ENCODE measurements at regions of chr3 and their contacts with region 1.

Region 1: DNA sequence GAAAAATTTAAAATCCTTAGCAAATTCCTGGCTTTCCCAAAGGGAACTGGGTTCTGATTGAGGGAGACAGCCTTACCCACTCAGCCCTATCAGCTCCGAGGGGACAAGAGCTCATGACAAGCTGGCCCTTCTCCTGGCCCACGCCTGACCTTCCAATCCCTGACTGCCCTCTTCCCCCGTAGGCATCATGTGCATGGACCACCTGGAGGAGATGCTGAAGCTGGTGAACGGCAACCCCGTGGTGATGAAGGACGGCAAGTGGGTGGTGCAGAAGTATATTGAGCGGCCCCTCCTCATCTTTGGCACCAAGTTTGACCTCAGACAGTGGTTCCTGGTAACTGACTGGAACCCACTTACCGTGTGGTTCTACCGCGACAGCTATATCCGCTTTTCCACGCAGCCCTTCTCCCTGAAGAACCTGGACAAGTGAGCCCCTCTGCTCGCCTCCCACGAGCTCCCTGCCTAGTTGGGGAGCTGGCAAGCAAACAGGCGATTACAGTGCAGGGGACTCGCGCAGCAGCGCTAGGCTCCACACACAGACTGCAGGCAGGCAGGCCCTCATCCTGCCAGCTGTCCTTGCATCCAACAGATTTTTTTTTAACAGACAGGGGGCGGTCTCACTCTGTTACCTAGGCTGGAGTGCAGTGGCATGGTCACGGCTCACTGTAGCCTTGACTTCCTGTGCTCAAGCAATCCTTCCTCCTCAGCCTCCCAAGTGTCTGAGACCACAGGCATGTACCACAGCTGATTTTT is 16.8 kb downstream of the RPUSD3 start:
- DNase-seq: no peak
- H3K4me3 ChIP-seq: no peak overlapping the region
- H3K27ac ChIP-seq: no peak overlapping the region
- H3K27me3 ChIP-seq: no peaks in the 10 kb centered on the region
- CTCF ChIP-seq: peak; percentile 28; the same call in 1 of the 2 replicates

Region 2: DNA sequence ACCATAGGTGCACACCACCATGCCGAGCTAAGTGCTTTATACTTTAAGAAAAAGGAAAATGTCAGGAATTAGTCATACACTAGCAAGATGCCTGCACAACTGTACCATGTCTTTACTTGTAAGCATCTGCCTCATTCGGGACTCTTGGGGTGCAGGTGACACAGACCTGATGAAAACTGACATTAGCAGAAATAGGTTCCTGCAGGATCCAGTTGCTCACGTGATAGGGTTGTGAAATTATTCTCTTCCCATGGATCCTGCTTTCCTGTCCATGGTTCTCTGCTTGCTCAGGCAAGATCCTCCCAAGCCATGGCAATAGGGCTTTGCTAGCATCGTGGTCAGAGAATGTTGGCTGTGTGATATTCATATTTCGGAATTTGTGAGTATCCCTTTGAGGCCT is 263.1 kb before region 1 on chr3:
- CTCF ChIA-PET with region 1: no interaction called
- POLR2A ChIA-PET with region 1: no interaction called
- DNase-seq: no peak
- H3K4me3 ChIP-seq: no peak overlapping the region
- H3K27ac ChIP-seq: no peak overlapping the region
- H3K27me3 ChIP-seq: no peaks in the 10 kb centered on the region
- CTCF ChIP-seq: no peak

Region 3: DNA sequence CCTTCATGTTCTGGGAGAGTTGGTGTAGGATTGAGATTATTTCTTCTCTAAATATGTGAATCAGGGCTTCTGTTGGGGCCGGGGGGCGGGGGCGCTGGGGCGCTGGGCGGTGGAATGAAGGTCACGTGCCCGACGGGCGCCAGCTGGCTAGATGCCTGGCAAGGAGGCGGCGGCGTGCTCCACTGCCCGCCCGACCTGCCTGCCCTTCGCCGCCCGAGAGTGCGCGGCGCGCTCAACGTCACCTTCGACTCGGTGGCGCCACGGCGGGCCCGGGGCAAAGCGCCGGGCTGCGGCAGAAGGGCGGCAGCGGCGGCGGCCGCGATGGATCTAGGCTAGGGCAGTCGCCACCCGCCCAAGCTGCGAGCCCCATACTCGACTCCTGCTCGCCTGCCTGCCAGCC is 226.4 kb before region 1 on chr3:
- CTCF ChIA-PET with region 1: interaction called, 13 read pairs
- POLR2A ChIA-PET with region 1: no interaction called
- DNase-seq: no peak
- H3K4me3 ChIP-seq: no peak overlapping the region
- H3K27ac ChIP-seq: no peak overlapping the region
- H3K27me3 ChIP-seq: peaks cover 3% of the 10 kb centered on the region
- CTCF ChIP-seq: no peak

Region 4: GRCh38 chr3:9666704-9667445 is 160.1 kb before region 1 on chr3:
- CTCF ChIA-PET with region 1: no interaction called
- POLR2A ChIA-PET with region 1: no interaction called
- DNase-seq: no peak
- H3K4me3 ChIP-seq: no peak overlapping the region
- H3K27ac ChIP-seq: no peak overlapping the region
- H3K27me3 ChIP-seq: no peaks in the 10 kb centered on the region
- CTCF ChIP-seq: no peak

Region 5: DNA sequence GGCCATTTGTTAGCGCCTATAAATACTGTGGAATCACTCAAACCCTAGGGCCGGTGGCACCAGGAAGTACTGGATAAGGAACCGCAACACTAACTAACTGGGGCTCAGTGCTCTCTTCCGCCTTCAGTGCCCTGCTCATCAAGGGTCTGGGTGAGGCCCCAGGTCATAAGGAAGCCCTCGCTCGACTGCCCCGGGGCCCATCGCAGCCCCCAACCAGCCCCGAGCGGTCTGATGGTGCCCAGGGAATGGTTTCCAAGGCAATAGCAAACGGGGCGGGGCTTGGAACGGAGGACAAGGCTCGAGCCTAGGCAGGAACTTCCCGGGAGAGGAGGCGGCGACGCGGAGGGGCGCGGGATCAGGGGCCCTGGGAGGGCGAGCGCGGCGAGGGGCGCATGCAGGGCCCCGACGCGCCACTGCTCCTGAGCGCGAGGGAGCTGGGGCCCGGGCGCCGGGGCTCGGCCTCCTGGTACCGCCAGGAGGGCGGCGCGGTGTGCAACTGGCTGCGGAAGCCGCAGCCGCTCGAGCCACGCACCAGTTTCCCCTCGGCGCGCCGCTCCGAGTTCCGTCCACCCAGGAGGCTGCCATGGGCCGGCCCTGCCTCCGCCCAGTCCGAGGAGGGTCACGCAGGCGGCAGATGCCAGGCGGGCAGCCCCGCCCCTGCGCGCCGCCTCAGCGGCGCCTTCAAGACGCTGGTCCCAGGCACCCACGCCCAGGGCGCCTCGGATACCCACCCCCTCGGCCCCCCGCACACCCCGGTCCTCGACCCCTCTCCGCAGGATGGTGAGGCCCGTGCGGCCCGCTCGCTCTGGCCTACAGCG is 17.2 kb before region 1 on chr3 and contains the start of gene TTLL3:
- CTCF ChIA-PET with region 1: no interaction called
- POLR2A ChIA-PET with region 1: no interaction called
- DNase-seq: no peak
- H3K4me3 ChIP-seq: peak within 1 kb of the TSS; percentile 55
- H3K27ac ChIP-seq: peak within 1 kb of the TSS; percentile 73
- H3K27me3 ChIP-seq: no peaks in the 10 kb centered on the region
- CTCF ChIP-seq: no peak
- polyA plus RNA-seq, gene TTLL3: 17.8 and 22.4 TPM in 2 replicates